ENCODE measurements at regions of chr12 and their contacts with region 1.

Region 1: GRCh38 chr12:57904848-57905811 is 36.2 kb upstream of the ATP23 start:
- DNase-seq: peak; percentile 57 to 95 (median 88)

Region 2: DNA sequence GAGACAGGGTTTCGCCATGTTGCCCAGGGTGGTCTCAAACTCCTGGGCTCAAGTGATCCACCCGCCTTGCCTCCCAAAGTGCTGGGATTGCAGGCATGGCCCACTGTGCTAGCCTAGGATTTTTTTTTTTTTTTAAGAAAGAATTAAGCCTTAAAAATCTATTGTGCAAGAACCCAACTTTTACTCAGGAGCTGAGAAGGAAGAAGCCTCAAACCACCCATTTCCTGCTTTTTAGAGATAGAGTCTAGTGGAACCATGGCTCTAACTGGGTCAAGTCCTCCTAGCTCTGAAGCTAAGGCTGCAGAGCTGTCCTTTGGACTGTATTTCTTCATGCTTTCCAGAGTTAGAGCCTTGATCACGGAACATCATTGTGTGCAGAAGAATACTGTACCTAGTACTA is 123.9 kb before region 1 on chr12:
- intact Hi-C with region 1: loop called (anchors 2 kb)
- DNase-seq: no peak

Region 3: GRCh38 chr12:57832966-57833365 is 72.2 kb before region 1 on chr12:
- intact Hi-C with region 1: loop called (anchors 5 kb)
- DNase-seq: no peak

Measured in head of caudate nucleus (tissue), 42 donors.